ENCODE measurements at regions of chr1 and their contacts with region 1.

Region 1: DNA sequence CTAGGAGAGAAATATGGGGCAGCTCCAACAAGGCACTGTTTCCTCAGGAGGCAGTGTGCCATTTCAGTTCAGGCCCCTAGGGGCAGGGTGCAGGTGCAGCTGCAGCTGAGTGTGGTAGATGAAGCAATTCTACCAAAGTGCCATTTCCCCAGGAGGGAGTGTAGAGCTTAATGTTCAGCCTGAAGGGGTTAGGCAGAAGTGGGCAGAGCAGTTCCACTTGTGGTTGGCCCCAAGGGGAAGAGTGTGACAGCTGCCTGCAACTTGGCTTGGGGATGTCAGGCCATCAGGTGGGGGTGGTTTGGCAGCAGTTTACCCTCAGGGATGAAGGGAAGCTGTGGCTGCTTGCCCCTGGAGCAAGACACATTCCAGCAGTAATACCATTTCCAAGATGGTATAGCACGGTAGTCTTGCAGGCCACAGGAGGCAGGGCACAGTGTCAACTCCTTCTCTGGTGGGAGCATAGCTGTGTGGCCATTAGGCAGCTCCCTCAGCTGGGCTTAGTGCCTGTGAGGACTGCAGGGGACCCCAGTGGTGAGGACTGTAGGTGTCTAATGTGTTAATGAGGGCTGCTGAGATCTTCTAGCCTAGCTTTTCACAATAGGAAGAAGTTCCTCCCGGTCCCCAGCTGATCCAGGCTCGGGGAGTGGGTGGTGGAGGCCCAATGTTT is 34.8 kb downstream of the RGSL1 start:
- DNase-seq: peak; percentile 6
- H3K27ac ChIP-seq: no peak overlapping the region
- CTCF ChIP-seq: no peak

Region 2: DNA sequence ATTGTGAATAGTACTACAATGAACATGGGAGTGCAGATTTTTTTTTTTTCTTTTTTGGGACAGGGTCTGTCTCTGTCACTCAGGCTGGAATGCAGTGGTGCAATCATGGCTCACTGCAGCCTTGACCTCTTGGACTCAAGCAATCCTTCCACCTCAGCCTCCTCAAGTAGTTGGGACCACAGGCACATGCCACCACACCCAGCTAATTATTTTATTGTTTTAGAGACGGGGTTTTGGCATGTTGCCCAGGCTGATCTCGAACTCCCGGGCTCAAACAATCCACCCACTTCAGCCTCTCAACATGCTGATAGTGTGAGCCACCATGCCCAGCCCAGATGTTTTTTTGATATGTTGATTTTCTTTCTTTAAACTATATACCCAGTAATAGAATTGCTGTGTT is 22.9 kb after region 1 on chr1:
- CTCF ChIA-PET with region 1: interaction called, 11 read pairs
- POLR2A ChIA-PET with region 1: no interaction called
- DNase-seq: no peak
- H3K27ac ChIP-seq: no peak overlapping the region
- CTCF ChIP-seq: no peak

Measured in RWPE1 (cell line).